AG04449 (cell line): ENCODE measurements at regions of chr17 and their contacts with region 1.

Region 1: GRCh38 chr17:56779898-56780733 is 53.6 kb downstream of the C17orf67 start:
- DNase-seq: no peak
- H3K4me3 ChIP-seq: peak overlapping the region; percentile 53
- CTCF ChIP-seq: peak; percentile 96

Region 2: DNA sequence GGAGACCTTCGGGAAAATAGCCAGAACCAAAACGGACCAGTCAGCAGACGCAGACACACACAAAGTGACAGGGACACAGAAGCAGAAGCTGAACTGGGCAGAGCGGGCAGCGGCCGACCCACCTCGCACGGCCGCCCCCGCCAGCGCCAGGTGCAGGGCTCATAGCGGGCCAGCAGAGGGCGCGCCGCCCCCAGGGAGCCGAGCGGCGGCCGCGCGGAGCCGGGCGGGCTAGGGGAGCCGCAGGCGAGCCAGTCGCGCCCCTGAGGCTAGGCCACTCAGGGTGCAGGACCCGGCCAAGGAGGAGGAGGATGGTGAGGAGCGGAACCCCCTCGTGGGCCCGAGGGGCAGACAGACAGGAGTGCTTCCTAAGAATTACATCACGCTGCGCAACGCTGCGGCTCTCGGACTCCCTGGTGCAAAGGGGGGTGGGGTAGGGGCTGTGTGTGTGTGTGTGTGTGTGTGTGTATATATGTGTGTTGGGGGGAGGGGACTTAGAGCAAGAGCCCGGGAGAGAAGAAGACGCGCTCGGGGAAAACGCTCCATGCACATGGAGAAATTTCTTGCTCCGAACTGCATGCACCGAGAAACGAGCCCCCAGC is 187.5 kb before region 1 on chr17:
- CTCF ChIA-PET with region 1: interaction called, 56 read pairs
- POLR2A ChIA-PET with region 1: no interaction called
- DNase-seq: no peak
- H3K4me3 ChIP-seq: peak overlapping the region; percentile 63
- CTCF ChIP-seq: peak; percentile 76

Region 3: GRCh38 chr17:56608951-56609350 is 171.2 kb before region 1 on chr17:
- CTCF ChIA-PET with region 1: no interaction called
- POLR2A ChIA-PET with region 1: no interaction called
- DNase-seq: no peak
- H3K4me3 ChIP-seq: no peak overlapping the region
- CTCF ChIP-seq: no peak

Region 4: DNA sequence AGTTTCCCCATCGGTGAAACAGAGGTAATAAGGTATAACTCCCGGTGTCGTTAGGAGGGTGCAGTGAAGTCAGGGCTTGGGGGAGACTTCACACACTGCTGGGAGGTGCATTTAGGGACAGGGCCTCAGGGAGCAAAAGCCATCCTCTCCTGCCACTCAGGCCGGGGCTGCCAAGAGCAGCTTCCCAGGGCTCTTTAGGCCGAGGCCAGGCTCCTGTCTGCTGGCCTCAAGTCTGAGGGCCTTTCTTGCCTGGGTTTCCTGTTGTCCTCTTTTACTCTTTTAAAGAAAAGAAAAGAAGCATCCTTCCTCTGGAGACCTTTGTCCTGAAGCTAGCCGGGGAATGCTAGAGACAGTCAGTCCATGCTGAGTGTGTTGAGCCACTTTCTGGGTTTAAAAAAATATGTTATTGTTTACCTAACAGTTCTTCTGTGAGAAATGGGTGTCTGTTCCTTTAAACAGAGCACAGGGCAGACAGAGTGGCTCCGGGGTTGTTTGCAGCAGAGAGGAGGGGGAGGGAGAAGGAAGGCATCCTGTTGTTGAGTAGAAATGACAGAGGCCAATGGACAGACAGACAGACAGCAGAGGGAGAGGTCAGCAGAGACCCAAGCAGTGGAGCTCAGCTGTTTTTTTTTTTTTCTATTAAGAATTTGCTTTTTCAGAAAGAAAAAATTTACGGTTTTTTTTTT is 25.4 kb before region 1 on chr17:
- CTCF ChIA-PET with region 1: interaction called, 22 read pairs
- POLR2A ChIA-PET with region 1: no interaction called
- DNase-seq: no peak
- H3K4me3 ChIP-seq: no peak overlapping the region
- CTCF ChIP-seq: no peak

Region 5: GRCh38 chr17:56762988-56763387 is 17.1 kb before region 1 on chr17:
- CTCF ChIA-PET with region 1: interaction called, 110 read pairs
- POLR2A ChIA-PET with region 1: no interaction called
- DNase-seq: no peak
- H3K4me3 ChIP-seq: no peak overlapping the region
- CTCF ChIP-seq: no peak

Region 6: DNA sequence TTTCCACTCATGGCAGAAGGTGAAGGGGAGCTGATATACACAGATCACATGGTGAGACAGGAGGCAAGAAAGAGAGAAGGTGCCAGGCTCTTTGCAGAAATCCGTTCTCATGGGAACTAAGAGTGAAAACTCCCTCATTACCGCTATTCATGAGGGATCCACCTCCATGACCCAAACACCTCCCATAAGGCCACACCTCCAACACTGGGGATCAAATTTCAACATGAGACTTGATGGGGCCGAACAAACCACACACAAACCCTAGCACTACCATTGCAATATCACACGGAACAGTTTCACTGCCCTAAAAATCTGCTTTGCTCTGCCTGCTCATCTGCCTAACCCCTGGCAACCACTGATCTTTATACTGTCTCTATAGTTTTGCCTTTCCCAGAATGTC is 18.8 kb after region 1 on chr17:
- CTCF ChIA-PET with region 1: interaction called, 21 read pairs
- POLR2A ChIA-PET with region 1: no interaction called
- DNase-seq: no peak
- H3K4me3 ChIP-seq: no peak overlapping the region
- CTCF ChIP-seq: no peak

Region 7: DNA sequence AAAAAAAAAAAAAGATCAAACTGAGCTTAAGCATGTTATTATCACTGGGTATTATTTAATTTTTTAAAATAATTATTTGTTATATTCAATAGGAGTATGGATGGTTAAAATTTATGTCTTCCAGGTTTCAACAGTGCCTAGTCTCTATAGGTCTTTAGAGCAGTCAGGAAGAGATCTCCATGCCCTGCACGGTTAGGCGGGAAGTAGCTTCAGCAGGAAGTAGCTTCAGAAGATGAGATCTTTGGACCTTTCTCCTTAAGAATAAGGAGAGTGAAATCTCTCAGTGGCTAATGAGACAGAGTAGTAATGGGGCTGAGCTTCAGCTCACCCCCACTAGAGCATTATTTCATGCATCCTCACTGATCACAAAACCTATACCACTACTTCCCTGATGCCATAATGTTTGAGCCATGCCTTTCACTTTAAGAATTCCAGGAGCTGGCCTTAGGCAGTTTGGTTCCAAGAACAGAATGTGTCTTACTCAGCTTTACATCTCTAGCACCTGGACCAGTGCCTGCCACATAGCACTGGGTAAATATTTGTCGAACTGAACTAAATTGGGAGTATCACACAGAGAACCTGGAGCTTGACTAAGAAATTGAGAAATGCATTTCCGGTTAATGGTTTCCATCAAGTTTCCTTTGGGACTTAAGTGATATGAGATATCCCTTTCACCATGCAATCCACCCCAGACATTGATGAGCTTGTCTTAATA is 241.3 kb after region 1 on chr17:
- CTCF ChIA-PET with region 1: no interaction called
- POLR2A ChIA-PET with region 1: no interaction called
- DNase-seq: no peak
- H3K4me3 ChIP-seq: no peak overlapping the region
- CTCF ChIP-seq: no peak